ENCODE measurements at regions of chr7 and their contacts with region 1.

Region 1: DNA sequence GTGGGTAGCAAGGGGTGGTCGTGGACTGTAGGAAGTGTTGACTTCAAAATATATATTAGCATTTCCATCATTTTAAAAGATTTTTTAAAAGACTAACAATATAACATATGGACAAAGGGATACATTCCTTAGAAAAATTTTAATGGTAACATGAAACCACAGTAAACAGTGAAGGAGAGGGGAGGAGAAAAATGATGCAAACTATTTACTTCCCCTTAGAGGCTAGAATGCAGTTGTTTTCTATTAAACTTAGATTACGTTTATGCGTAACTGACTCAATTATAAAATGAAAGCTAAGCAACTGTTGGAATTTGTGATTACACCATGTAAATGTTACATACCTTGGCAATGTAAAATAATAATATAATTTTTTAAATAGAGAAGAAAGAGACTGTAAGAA is 41.3 kb downstream of the CALD1 start:
- DNase-seq: no peak
- ATAC-seq: no peak
- H3K4me3 ChIP-seq: no peak overlapping the region
- H3K4me3 Mint-ChIP-seq: no peak overlapping the region
- H3K27ac ChIP-seq: no peak overlapping the region
- H3K27ac Mint-ChIP-seq: no peak overlapping the region
- H3K4me1 ChIP-seq: no peaks in the 10 kb centered on the region
- H3K4me1 Mint-ChIP-seq: no peaks in the 10 kb centered on the region
- H3K27me3 ChIP-seq: no peaks in the 10 kb centered on the region
- H3K27me3 Mint-ChIP-seq: peaks cover 0 to 2% (median 0%) of the 10 kb centered on the region in 5 donors

Region 2: DNA sequence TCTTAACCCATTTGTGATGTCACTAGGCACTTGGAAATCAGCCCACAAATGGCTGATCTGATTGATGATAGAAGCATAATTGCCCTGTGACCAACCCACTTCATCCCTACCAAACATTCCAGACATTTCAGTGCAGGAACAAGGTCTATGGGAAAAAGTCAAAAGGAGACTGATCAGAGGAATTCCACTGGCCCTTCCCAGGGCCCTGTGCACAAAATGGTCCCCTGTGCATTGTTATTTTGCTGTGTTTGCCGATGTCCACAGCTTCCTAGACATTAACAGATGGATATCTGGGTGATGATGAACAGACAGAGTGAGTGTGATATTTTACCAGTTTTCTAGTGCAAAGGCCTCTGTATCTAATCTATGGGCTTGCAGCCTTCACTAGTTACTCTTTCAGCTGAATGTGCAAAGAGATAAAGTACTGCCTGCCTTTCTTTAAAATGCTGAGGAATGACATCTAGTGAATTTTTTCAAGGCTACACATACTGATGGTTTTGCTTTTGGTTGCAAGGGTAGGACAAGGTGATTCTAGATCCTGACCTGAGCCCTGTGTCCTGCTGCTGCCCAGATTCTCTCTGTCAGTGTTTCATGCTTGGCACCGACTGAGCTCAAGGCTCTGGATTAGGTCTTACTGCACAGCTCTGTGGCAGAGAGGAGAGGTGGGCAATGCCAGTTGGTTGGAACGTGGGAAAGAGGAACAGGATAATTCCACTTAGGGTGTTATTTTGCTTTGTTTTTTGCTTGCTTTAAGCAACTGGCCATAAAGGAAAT is 14.1 kb after region 1 on chr7:
- CTCF ChIA-PET with region 1: interaction called, 3 read pairs
- POLR2A ChIA-PET with region 1: no interaction called
- intact Hi-C with region 1: loop called in 1 of 2 experiments (anchors 2 kb)
- DNase-seq: no peak
- ATAC-seq: no peak
- H3K4me3 ChIP-seq: no peak overlapping the region
- H3K4me3 Mint-ChIP-seq: no peak overlapping the region
- H3K27ac ChIP-seq: no peak overlapping the region
- H3K27ac Mint-ChIP-seq: no peak overlapping the region
- H3K4me1 ChIP-seq: no peaks in the 10 kb centered on the region
- H3K4me1 Mint-ChIP-seq: no peaks in the 10 kb centered on the region
- H3K27me3 ChIP-seq: no peaks in the 10 kb centered on the region
- H3K27me3 Mint-ChIP-seq: peaks cover 0 to 2% (median 0%) of the 10 kb centered on the region in 5 donors

Measured in naive thymus-derived CD4-positive, alpha-beta T cell (primary cell).